HCT116 (cell line): ENCODE measurements at regions of chr6 and their contacts with region 1.

Region 1: GRCh38 chr6:36724514-36725390 is 27.1 kb downstream of the RAB44 start:
- DNase-seq: peak; percentile 78
- ATAC-seq: peak; percentile 94
- H3K4me3 ChIP-seq: no peak overlapping the region
- H3K27ac ChIP-seq: no peak overlapping the region
- H3K4me1 ChIP-seq: no peaks in the 10 kb centered on the region; a peak in 1 of 4 replicates
- H3K27me3 ChIP-seq: no peaks in the 10 kb centered on the region
- CTCF ChIP-seq: peak; percentile 70 to 89 (median 74)
- POLR2A ChIP-seq: no peak
- RAD21 ChIP-seq: peak; percentile 96

Region 2: DNA sequence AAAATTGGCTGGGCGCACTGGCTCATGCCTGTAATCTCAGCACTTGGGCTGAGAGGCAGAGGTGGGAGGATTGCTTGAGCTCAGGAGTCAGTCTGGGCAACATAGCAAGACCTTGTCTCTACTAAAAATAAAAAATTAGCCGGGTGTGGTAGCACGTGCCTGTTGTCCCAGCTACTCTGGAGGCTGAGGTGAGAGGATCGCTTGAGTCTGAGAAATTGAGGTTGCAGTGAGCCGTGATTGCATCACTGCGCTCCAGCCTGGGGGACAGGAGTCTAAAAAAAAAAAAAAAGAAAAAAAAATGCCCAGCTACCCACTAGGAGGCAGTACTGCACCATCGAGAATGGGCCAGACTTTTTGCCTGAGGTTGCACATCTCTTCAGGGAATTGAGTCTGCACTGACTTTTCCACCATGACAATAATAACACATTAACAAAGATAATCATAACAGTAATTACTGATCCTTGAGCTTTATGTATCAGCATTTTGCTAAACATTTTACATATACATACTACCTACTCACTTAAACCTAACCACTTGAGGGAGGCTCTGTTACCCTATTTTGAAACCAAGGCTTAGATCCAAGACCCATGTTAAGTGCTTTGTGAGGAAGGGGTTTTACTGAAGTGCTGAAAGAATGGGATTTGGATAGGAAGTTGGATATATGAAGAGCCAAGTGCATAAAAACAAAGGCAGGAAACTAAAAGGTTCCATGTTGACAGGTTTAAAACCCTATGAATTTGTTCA is 109.6 kb before region 1 on chr6:
- CTCF ChIA-PET with region 1: interaction called, 36 read pairs
- POLR2A ChIA-PET with region 1: interaction called, 5 read pairs
- RAD21 ChIA-PET with region 1: interaction called, 3 to 6 read pairs
- intact Hi-C with region 1: loop called (anchors 1 kb)
- DNase-seq: peak; percentile 41
- ATAC-seq: peak; percentile 58
- H3K4me3 ChIP-seq: no peak overlapping the region
- H3K27ac ChIP-seq: no peak overlapping the region
- H3K4me1 ChIP-seq: peaks cover 16 to 17% of the 10 kb centered on the region in 2 experiments
- H3K27me3 ChIP-seq: no peaks in the 10 kb centered on the region
- CTCF ChIP-seq: peak; percentile 70 to 86 (median 79)
- POLR2A ChIP-seq: no peak
- RAD21 ChIP-seq: peak; percentile 89

Region 3: DNA sequence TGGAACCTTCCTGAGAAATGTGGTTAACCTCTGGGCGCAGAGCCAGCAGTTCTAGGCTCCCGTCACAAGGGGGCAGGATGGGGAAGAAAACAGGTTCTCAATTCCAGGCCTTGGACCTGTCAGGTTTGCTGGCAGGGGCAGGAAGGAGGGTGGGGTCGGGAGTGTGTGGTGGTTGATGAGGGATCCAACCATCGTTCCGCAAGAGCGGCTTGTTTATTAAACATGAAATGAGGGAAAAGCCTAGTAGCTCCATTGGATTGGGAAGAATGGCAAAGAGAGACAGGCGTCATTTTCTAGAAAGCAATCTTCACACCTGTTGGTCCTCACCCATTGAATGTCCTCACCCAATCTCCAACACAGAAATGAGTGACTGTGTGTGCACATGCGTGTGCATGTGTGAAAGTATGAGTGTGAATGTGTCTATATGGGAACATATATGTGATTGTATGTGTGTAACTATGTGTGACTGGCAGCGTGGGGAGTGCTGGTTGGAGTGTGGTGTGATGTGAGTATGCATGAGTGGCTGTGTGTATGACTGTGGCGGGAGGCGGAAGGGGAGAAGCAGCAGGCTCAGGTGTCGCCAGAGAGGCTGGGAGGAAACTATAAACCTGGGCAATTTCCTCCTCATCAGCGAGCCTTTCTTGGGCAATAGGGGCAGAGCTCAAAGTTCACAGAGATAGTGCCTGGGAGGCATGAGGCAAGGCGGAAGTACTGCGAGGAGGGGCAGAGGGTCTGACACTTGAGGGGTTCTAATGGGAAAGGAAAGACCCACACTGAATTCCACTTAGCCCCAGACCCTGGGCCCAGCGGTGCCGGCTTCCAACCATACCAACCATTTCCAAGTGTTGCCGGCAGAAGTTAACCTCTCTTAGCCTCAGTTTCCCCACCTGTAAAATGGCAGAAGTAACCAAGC is 100.9 kb before region 1 on chr6:
- CTCF ChIA-PET with region 1: interaction called, 4 read pairs
- POLR2A ChIA-PET with region 1: no interaction called
- RAD21 ChIA-PET with region 1: no interaction called
- intact Hi-C with region 1: loop called (anchors 1 kb)
- DNase-seq: peak; percentile 58
- ATAC-seq: peak; percentile 92
- H3K4me3 ChIP-seq: no peak overlapping the region
- H3K27ac ChIP-seq: no peak overlapping the region
- H3K4me1 ChIP-seq: peaks cover 0 to 11% of the 10 kb centered on the region in 2 experiments; a peak in 2 of 4 replicates
- H3K27me3 ChIP-seq: no peaks in the 10 kb centered on the region
- CTCF ChIP-seq: peak; percentile 92 to 96 (median 93)
- POLR2A ChIP-seq: no peak
- RAD21 ChIP-seq: peak; percentile 98